MCF 10A (cell line): ENCODE measurements at regions of chr21 and their contacts with region 1.

Region 1: DNA sequence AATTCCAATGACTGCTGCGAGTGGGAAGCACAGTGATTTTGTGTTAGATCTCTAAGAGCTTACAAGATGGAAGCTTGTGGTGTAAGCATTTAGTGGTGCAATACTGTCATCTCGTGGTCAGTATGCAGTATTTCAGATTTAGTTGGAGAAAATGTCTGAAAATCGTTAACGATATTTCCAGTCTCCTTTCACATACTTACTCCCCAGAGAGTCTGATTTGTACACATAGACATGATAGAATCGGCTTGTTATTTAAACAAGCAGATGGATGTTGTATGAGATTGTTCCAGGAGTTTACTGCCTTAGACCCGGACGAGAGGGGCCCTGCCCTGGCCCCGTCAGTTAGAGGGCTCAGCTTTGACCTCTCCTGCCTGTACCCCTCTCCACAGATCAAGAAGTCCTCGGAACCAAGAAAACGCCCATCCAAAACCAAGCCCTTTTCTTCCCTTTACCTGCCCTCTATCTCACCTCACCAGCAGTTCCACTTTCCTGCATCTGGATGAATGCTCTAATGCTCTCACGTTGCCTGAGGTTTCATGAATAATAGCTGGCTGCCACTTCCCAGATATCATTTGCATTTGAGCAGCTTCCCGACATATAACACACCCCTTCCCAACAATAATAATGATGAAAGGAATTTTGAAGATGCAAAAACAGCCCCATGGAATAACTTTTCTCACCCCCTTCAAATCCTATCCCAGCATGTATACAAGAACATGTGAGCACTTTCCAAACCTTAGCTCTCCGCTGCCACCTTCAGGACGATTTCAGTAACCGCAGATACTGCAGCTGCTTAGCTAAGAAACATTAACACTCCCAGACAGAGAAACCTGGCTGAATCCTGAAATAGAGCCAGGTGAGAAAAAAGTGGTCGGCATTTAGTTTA is 247.3 kb downstream of the LTN1 start:
- DNase-seq: peak; percentile 84
- H3K4me3 Mint-ChIP-seq: no peak overlapping the region
- H3K27ac Mint-ChIP-seq: no peak overlapping the region
- H3K4me1 Mint-ChIP-seq: no peaks in the 10 kb centered on the region
- H3K27me3 Mint-ChIP-seq: no peaks in the 10 kb centered on the region
- CTCF ChIP-seq: peak; percentile 88

Region 2: DNA sequence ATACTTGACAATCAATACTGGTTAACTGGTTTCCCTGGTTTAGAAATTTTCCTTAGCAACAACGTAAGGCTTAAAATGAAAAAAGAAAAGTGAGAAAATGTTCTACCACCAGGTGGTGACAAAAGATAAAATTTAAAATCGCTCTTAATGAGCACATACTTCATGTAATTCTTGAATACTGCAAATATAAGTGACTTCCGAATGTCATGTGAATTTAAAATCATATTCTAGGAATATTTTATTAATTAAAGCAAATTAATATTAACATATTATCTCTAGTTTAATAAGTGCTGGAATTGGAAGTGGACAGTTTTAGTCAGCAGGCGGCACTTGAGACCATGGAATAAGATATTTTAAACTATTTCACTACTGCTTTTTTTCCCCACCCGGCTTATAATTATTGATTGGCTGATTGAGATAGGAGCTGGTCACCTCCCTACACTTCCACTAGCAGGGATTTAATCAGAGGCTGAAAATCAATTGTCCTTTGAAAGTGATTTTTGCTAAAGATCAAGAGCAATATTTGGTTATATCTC is 1895.2 kb before region 1 on chr21:
- CTCF ChIA-PET with region 1: interaction called, 19 read pairs
- POLR2A ChIA-PET with region 1: no interaction called
- intact Hi-C with region 1: loop called (anchors 1 kb)
- DNase-seq: peak; percentile 52
- H3K4me3 Mint-ChIP-seq: no peak overlapping the region
- H3K27ac Mint-ChIP-seq: no peak overlapping the region
- H3K4me1 Mint-ChIP-seq: peaks cover 18% of the 10 kb centered on the region
- H3K27me3 Mint-ChIP-seq: peaks cover 29% of the 10 kb centered on the region
- CTCF ChIP-seq: peak; percentile 70

Region 3: GRCh38 chr21:27722095-27722494 is 1023.3 kb before region 1 on chr21:
- CTCF ChIA-PET with region 1: interaction called, 16 read pairs
- POLR2A ChIA-PET with region 1: interaction called, 3 read pairs
- intact Hi-C with region 1: no loop called
- DNase-seq: no peak
- H3K4me3 Mint-ChIP-seq: no peak overlapping the region
- H3K27ac Mint-ChIP-seq: peak overlapping the region; percentile 36
- H3K4me1 Mint-ChIP-seq: peaks cover 11% of the 10 kb centered on the region
- H3K27me3 Mint-ChIP-seq: no peaks in the 10 kb centered on the region
- CTCF ChIP-seq: no peak

Region 4: DNA sequence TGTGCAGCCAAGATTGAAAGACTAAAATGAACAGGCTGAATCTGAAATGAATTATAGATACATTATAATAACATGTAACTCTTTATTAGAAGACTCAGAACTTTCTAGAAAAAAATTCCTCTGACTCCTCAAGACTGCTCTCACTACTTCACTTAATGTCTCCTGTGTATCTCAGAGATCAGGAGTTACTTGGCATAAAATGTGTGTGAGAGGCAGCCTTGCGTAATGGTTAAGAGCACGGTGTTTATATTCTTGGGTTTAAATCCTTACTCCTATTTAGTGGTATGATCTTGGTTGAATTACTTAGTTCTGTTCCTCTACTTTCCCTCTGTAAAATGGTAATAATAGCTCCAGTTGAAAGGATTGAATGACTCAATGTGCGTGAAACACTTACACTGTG is 387.6 kb before region 1 on chr21:
- CTCF ChIA-PET with region 1: interaction called, 16 read pairs
- POLR2A ChIA-PET with region 1: no interaction called
- intact Hi-C with region 1: no loop called
- DNase-seq: no peak
- H3K4me3 Mint-ChIP-seq: no peak overlapping the region
- H3K27ac Mint-ChIP-seq: no peak overlapping the region
- H3K4me1 Mint-ChIP-seq: no peaks in the 10 kb centered on the region
- H3K27me3 Mint-ChIP-seq: no peaks in the 10 kb centered on the region
- CTCF ChIP-seq: no peak

Region 5: GRCh38 chr21:28624626-28625025 is 120.7 kb before region 1 on chr21:
- CTCF ChIA-PET with region 1: no interaction called
- POLR2A ChIA-PET with region 1: no interaction called
- intact Hi-C with region 1: no loop called
- DNase-seq: peak; percentile 15
- H3K4me3 Mint-ChIP-seq: no peak overlapping the region
- H3K27ac Mint-ChIP-seq: no peak overlapping the region
- H3K4me1 Mint-ChIP-seq: peaks cover 8% of the 10 kb centered on the region
- H3K27me3 Mint-ChIP-seq: no peaks in the 10 kb centered on the region
- CTCF ChIP-seq: no peak

Region 6: GRCh38 chr21:28639737-28640136 is 105.6 kb before region 1 on chr21:
- CTCF ChIA-PET with region 1: interaction called, 22 read pairs
- POLR2A ChIA-PET with region 1: interaction called, 8 read pairs
- intact Hi-C with region 1: no loop called
- DNase-seq: peak; percentile 49
- H3K4me3 Mint-ChIP-seq: no peak overlapping the region
- H3K27ac Mint-ChIP-seq: no peak overlapping the region
- H3K4me1 Mint-ChIP-seq: peaks cover 38% of the 10 kb centered on the region
- H3K27me3 Mint-ChIP-seq: no peaks in the 10 kb centered on the region
- CTCF ChIP-seq: no peak

Region 7: GRCh38 chr21:28943631-28944030 is 198.3 kb after region 1 on chr21:
- CTCF ChIA-PET with region 1: interaction called, 22 read pairs
- POLR2A ChIA-PET with region 1: no interaction called
- intact Hi-C with region 1: loop called (anchors 1 kb)
- DNase-seq: no peak
- H3K4me3 Mint-ChIP-seq: no peak overlapping the region
- H3K27ac Mint-ChIP-seq: no peak overlapping the region
- H3K4me1 Mint-ChIP-seq: peaks cover 10% of the 10 kb centered on the region
- H3K27me3 Mint-ChIP-seq: no peaks in the 10 kb centered on the region
- CTCF ChIP-seq: no peak

Region 8: GRCh38 chr21:28986677-28987076 is 241.3 kb after region 1 on chr21:
- CTCF ChIA-PET with region 1: no interaction called
- POLR2A ChIA-PET with region 1: no interaction called
- intact Hi-C with region 1: no loop called
- DNase-seq: no peak
- H3K4me3 Mint-ChIP-seq: no peak overlapping the region
- H3K27ac Mint-ChIP-seq: no peak overlapping the region
- H3K4me1 Mint-ChIP-seq: peaks cover 16% of the 10 kb centered on the region
- H3K27me3 Mint-ChIP-seq: no peaks in the 10 kb centered on the region
- CTCF ChIP-seq: no peak